K562 (cell line): ENCODE measurements at regions of chr10 and their contacts with region 1.

Region 1: DNA sequence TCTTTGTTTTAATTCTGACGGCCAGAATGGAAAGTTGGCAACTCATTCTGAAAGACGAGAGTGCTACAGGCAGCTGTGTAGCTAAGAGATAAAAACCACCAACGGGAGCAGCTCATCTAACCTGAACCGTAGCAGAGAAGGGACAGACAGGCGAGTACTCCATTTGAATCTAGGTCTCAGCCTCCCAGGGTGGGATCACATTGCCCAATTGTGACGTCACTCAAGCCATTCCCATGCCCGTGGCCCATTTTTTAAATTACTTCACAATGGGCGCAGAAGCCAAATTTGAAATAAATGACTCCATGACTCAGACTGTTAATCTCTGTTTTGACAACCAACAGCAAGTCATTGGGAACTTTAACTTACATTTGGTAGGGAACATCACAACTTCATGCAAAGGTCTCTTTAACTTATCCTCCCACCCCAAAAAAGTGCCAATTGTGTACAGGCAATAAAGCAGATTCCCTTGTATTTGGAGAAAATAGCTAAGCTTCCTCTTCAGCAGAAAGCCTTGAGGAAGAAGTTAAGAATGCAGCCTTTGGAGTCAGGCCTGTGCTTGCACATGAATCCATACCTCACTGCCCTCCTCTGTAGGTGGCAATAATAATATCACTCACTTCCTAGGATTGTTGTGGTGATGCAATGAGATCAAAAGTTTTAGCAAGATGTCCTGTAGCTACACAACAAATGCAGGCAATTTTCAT is 93.2 kb upstream of the KIF5B start:
- DNase-seq: peak in 2 of 4 experiments; percentile 36 to 48
- ATAC-seq: peak; percentile 67
- H3K4me3 ChIP-seq: no peak overlapping the region
- H3K27ac ChIP-seq: peak overlapping the region; percentile 27; the same call in 2 of the 3 replicates
- H3K4me1 ChIP-seq: peaks cover 4 to 15% of the 10 kb centered on the region in 2 experiments
- H3K27me3 ChIP-seq: no peaks in the 10 kb centered on the region; a peak in 2 of 5 replicates
- CTCF ChIP-seq: no peak
- EP300 ChIP-seq: no peak
- POLR2A ChIP-seq: no peak
- RAD21 ChIP-seq: no peak

Region 2: DNA sequence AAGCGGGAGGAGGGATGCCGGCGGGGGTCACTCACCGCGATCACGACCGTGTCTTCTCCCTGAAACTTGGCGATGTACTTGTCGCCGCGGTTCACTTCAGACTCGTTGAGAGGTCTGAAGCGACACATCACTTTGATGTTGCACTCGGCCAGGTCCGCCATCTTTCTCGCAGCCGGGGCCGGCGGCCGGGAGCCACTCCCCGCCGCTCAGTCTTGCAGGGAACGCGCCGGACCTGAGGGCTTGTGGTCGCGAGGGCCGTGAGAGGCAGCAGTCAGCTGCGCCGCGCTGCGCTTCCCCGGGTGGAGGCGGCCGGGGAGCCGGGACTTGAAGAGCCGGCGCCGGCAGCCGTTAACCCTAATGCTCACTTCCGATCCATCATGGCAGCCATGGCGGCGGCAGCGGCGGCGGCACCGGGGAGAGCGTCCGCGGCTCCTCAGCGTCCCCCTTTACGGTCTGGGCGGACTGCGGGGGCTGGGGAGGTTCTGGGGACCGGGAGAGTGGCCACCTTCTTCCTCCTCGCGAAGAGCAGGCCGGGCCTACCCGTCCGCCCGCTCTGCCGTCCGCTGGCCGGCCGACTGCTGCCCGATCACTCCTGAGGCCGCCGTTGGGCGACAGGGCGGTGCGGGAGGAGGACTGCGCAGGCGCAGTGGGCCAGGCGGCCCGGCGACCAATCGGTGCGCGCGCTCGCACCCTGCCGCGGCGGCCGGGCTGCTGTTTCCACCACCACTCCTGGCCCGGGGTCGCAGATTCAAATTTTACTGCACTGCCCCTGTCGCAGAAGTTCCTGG is 93.4 kb before region 1 on chr10 and contains the start of gene KIF5B:
- CTCF ChIA-PET with region 1: no interaction called
- POLR2A ChIA-PET with region 1: no interaction called
- in situ Hi-C with region 1: no loop called
- intact Hi-C with region 1: loop called (anchors 10 kb)
- DNase-seq: peak; percentile 94 to 98 (median 98)
- ATAC-seq: peak; percentile 87
- H3K4me3 ChIP-seq: peak within 1 kb of the TSS; percentile 95
- H3K27ac ChIP-seq: peak within 1 kb of the TSS; percentile 95
- H3K4me1 ChIP-seq: peaks cover 12 to 43% of the 10 kb centered on the region in 2 experiments
- H3K27me3 ChIP-seq: no peaks in the 10 kb centered on the region
- CTCF ChIP-seq: no peak
- EP300 ChIP-seq: no peak
- POLR2A ChIP-seq: peak; percentile 99
- RAD21 ChIP-seq: no peak
- polyA plus RNA-seq, gene KIF5B: 24.4 to 29.8 TPM